Activated CD4-positive, alpha-beta memory T cell treated with anti-CD3 and anti-CD28 coated beads, Interleukin-2, amount 10 ng/mL, durations not matched to agents 7 days and 5 days (primary cell): ENCODE measurements at regions of chr14 and their contacts with region 1.

Region 1: DNA sequence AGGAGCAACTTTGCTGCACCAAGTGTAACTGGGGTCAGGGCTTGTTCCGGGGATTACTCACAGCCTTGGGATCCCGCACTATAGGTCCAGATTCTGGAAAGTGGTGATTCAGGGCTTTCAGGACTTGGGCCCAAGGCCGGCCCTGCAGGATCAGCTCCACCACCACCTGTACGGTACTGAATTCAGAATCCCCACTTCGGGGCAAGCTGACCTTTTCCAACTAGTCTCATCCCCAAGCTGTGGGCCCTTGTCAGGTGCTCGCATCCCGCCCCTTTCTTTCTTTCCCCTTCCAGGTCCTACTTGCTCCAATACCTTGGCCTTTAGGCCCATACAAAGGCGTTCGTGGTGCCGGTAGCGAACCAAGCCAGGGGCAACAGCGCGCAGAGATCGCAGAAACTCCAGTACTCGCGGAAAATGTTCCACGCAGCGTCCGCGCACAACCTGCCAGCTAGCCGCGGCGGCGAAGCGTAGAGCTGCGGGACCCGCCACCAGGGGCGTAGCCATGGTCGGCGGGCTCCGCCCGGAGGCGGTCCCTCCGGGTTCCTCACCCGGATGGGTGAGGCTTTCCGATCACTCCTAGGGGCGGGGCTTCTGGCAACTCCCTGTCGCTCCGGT is 487 bp downstream of the TINF2 start:
- DNase-seq: peak; percentile 94
- H3K4me3 Mint-ChIP-seq: peak overlapping the region; percentile 89
- H3K27ac Mint-ChIP-seq: peak overlapping the region; percentile 96
- H3K4me1 Mint-ChIP-seq: peaks cover 61% of the 10 kb centered on the region
- H3K27me3 Mint-ChIP-seq: no peaks in the 10 kb centered on the region

Region 2: GRCh38 chr14:24146978-24147760 is 94.8 kb before region 1 on chr14 and contains the start of gene RNF31:
- CTCF ChIA-PET with region 1: interaction called, 8 read pairs
- POLR2A ChIA-PET with region 1: interaction called, 24 read pairs
- DNase-seq: peak; percentile 99
- H3K4me3 Mint-ChIP-seq: peak within 1 kb of the TSS; percentile 96
- H3K27ac Mint-ChIP-seq: peak within 1 kb of the TSS; percentile 99
- H3K4me1 Mint-ChIP-seq: peaks cover 58% of the 10 kb centered on the region
- H3K27me3 Mint-ChIP-seq: no peaks in the 10 kb centered on the region
- total RNA-seq, gene RNF31: 122 to 129 TPM

Region 3: DNA sequence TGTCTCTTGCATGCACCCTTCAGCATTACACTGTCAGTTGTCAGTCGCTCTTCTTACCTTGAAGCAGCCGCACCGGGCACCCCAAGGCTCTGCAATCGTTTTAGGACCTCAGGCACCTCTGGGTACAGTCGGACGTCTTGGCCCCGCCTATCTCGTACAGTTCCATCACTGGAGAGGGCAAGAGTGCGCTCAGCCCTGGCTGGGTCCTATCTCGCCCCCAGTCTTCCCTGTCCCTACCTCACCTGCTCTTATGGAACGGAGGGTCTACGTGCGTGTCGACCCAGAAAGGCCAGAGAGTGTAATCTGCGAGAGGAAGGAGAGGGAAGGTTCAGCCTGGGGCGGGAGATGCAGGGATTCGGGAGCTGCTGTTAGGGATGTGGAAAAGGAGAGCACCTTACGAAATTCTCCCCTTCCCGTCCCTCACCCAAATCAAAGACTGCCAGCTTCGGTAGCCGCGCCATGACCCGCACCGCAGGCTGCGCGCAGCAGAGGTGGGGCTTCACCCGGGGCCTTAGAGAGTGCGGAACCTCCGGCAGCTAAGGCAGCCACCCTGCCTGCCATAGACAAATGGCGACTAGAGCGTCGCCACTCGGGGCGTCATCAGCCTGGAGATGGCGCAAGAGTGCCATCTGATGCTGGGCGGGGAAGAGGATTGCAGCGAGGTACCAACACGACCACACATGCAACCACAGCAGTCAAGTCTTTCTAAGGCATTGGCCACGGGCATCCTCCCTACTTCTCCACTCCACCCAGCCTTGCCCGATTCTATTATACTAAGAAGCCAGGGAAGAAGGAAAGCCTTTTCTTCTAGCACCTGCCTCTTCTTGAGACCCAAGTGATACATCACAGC is 26.2 kb before region 1 on chr14 and contains the start of gene MDP1:
- CTCF ChIA-PET with region 1: interaction called, 33 read pairs
- POLR2A ChIA-PET with region 1: interaction called, 136 read pairs
- DNase-seq: peak; percentile 92
- H3K4me3 Mint-ChIP-seq: peak within 1 kb of the TSS; percentile 88
- H3K27ac Mint-ChIP-seq: peak within 1 kb of the TSS; percentile 95
- H3K4me1 Mint-ChIP-seq: peaks cover 64% of the 10 kb centered on the region
- H3K27me3 Mint-ChIP-seq: no peaks in the 10 kb centered on the region
- total RNA-seq, gene MDP1: 13.5 to 17.0 TPM

Region 4: DNA sequence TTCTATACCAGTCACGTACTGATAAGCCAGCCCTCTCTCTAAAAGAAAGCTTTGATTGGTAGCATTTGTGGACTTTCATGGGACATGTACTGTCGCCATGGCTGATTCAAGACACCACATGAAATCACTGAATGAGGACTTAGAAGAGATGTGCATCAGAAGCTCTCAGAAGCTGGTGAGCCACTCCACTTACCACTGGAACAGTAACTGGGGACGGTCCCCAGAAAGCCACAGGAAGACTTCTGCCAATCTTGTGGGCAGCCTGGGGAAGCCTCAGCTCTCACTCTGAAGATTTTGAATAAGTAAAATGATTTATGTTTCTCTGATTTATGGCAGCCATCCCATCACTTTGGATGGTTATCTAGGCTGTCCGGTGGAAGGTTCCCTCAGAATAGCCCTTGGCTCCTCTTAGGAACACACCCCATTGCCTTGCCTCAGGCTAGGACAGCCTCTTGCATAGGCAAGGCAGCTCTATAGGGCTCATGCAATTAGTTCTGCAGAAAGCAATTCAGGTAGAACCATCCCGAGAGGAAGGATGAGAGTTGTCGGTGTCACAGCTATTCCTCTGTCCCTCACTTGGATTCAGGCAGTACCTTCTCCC is 47.8 kb after region 1 on chr14:
- CTCF ChIA-PET with region 1: interaction called, 213 read pairs
- POLR2A ChIA-PET with region 1: interaction called, 15 read pairs
- DNase-seq: peak; percentile 76
- H3K4me3 Mint-ChIP-seq: no peak overlapping the region
- H3K27ac Mint-ChIP-seq: no peak overlapping the region
- H3K4me1 Mint-ChIP-seq: peaks cover 23% of the 10 kb centered on the region
- H3K27me3 Mint-ChIP-seq: peaks cover 22% of the 10 kb centered on the region

Region 5: DNA sequence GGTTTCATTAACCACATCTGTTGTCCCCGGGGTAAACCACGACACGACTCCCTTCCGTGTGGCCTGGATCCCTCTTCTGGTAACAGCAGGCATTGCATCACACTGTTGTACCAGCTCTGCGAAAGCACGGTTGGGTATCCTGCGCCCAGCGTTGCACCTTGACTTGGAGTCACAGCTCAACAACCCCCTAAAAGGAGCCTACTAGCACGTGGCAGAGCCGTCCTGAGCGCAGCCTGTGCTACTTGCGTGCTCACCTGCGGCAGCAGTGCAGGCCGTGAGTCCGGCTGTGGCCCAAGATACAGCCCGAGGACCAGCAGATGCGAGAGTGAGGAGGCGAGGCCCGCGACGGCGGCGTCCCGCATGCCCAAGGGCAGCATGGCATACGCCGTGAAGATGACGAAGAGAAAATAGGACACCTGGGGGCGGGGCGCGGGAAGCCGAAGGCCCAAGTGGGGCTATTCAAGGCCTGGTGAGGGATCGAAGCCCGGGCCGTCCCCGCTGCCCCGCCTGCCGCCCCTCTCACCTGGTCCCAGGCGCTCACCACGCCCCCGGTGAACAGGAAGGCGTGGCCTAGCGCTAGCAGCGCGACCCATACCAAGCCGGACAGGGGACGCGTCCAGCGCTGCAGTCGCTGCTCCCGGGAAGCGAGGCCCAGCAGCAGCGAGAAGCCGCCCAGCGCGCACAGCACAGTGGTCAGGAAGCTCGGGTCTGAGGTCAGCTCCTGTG is 90.5 kb after region 1 on chr14:
- CTCF ChIA-PET with region 1: interaction called, 64 read pairs
- POLR2A ChIA-PET with region 1: interaction called, 28 read pairs
- DNase-seq: peak; percentile 89
- H3K4me3 Mint-ChIP-seq: peak overlapping the region; percentile 71
- H3K27ac Mint-ChIP-seq: peak overlapping the region; percentile 61
- H3K4me1 Mint-ChIP-seq: peaks cover 81% of the 10 kb centered on the region
- H3K27me3 Mint-ChIP-seq: peaks cover 35% of the 10 kb centered on the region